ENCODE measurements at regions of chr4 and their contacts with region 1.

Region 1: GRCh38 chr4:90904018-90904417 is 776.8 kb downstream of the CCSER1 start:
- DNase-seq: no peak
- H3K4me3 ChIP-seq: no peak overlapping the region
- H3K27ac ChIP-seq: no peak overlapping the region
- H3K4me1 ChIP-seq: no peaks in the 10 kb centered on the region
- H3K27me3 ChIP-seq: no peaks in the 10 kb centered on the region
- CTCF ChIP-seq: no peak
- EP300 ChIP-seq: no peak
- POLR2A ChIP-seq: no peak

Region 2: GRCh38 chr4:89447548-89447947 is 1456.5 kb before region 1 on chr4:
- in situ Hi-C with region 1: no loop called
- intact Hi-C with region 1: loop called (anchors 5 kb)
- DNase-seq: no peak
- H3K4me3 ChIP-seq: no peak overlapping the region
- H3K27ac ChIP-seq: no peak overlapping the region
- H3K4me1 ChIP-seq: no peaks in the 10 kb centered on the region
- H3K27me3 ChIP-seq: no peaks in the 10 kb centered on the region
- CTCF ChIP-seq: no peak
- EP300 ChIP-seq: no peak
- POLR2A ChIP-seq: no peak

Region 3: DNA sequence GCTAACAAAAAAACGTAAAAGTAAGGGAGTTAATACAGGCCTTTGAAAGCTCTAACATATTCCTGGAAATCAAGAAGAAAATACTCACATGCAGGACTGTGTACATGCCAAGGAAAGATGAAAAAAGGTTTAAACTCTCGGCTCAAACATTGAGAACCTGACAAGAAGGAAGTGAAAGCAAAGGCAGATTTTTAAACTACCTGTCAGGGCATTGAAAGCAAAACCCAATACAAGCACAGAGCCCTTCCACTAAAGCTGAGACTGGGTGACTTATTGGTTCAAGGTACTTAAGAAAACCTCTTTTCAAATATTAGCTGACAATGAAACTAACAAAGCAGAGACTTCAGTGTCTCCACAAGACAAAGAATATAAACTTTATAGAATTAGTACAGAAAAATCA is 1086.7 kb after region 1 on chr4:
- in situ Hi-C with region 1: no loop called
- intact Hi-C with region 1: no loop called
- DNase-seq: no peak
- H3K4me3 ChIP-seq: no peak overlapping the region
- H3K27ac ChIP-seq: no peak overlapping the region
- H3K4me1 ChIP-seq: no peaks in the 10 kb centered on the region
- H3K27me3 ChIP-seq: no peaks in the 10 kb centered on the region
- CTCF ChIP-seq: no peak
- EP300 ChIP-seq: no peak
- POLR2A ChIP-seq: no peak